ENCODE measurements at regions of chr5 and their contacts with region 1.

Region 1: DNA sequence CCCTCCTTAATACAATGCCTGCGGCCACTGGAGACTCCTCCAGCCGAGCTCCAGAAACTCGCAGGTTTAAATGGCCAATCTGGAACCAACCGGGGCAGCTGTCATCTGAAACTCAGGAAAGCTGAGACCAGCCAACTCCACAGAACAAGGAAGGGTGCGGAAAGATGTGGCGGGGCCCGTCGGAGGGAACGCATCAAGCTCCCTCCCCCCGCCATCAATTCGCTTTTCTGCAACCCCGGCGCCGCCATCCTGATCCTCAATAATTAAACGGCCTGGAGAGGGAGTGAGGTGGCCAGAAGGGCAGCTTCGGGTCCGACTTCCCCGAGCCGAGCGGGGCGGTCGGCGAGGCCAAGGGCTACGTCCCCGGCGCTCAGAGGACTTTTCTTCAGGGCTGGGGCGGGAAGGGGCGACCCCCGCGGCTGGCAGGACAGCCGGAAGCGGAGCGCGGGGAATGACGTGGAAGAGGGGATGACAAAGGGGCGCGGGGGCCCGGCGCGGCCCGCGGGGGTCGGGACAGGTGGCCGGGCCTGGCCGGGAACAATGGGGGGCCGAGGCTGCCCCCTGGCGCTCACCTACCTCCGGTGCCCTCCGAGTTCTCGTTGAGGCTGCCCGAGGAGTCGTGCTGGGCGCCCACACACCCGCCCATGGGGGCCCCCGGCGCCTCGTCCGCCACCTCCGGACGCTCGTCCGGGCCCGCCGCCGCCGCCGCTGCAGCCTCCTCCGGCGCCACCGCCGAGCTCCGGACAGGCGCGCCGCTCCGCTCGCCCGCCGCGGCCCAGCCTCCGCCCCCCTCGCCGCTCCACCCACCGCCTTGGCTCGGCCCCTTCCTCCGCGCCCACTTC is at the start of gene UBTD2:
- DNase-seq: peak in 1 of 2 donors; percentile 91
- H3K4me3 ChIP-seq: peak within 1 kb of the TSS; percentile 86 to 98
- H3K27ac ChIP-seq: peak within 1 kb of the TSS; percentile 88 to 97
- H3K4me1 ChIP-seq: peaks cover 6 to 23% of the 10 kb centered on the region in 2 donors
- H3K27me3 ChIP-seq: no peaks in the 10 kb centered on the region
- CTCF ChIP-seq: peak in 2 of 3 experiments; percentile 26 to 61
- total RNA-seq, gene UBTD2: 6.8 TPM

Region 2: DNA sequence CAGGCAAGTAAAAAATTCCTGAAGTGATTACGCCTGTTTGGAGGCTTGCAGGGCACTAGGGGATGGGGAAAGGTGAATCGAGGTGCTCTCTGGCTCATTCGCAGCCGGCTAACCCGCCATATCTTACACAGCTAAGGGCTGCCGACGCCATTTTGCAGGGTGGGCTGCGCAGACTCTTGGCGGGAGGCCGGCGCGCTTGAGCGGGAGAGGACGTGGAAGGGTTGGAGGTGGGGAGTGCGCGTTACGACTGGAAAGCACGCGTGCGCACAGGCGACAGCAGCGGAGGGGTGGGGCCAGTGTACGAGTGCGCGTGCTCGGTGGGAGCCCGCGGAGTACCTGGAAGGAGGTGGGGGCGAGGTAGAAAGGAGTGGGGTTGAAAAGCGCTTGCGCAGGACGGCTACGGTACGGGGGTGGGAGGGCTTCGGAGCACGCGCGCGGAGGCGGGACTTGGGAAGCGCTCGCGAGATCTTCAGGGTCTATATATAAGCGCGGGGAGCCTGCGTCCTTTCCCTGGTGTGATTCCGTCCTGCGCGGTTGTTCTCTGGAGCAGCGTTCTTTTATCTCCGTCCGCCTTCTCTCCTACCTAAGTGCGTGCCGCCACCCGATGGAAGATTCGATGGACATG is 895.8 kb before region 1 on chr5 and contains the start of gene NPM1:
- intact Hi-C with region 1: loop called (anchors 5 kb)
- DNase-seq: peak; percentile 78 to 97
- H3K4me3 ChIP-seq: peak within 1 kb of the TSS; percentile 68 to 94
- H3K27ac ChIP-seq: peak within 1 kb of the TSS; percentile 87 to 88
- H3K4me1 ChIP-seq: peaks cover 0 to 18% of the 10 kb centered on the region in 2 donors
- H3K27me3 ChIP-seq: no peaks in the 10 kb centered on the region
- CTCF ChIP-seq: no peak
- total RNA-seq, gene NPM1: 269 TPM

Region 3: DNA sequence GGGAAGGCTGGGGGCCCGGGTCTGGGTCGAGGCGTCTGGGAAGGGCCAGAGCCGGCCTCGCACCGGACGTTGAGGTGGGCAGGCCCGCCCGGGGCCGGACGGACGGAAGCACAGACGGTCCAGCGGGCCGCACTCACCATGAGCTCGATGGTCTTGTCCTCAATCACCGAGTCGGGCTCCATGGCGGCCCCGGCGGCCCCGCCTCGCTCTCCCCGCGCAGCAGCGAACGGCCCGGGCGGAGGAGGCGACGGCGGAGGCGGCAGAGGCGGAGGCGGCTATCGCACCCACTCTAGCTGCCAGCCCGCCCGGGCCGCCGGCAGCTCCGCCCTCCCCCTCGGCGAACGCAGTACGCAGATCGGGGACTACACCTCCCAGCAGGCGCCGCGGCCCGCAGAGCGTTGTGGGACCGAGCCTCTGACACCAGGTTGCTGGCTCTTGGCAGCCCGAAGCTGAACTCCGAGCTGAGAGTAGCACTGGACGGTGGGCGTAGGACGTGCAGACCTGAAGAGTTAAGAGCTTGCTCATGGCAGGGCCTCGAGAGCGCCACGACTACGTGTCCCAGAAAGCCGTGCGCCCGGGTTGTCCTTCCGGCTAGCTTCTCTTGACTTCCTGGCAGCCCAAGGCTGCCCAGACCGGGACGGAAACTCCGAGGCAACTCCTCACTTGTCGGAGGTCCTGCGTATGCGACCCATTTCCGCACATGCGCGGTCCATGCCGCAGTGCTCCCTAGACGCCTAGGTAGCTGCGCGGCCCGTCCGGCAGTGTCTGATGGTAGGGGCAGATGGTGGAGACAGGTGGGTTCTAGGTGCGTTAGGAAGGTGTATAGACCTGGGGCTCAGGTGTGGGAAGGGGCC is 276.7 kb before region 1 on chr5 and contains the start of gene FBXW11:
- intact Hi-C with region 1: loop called (anchors 2 kb)
- DNase-seq: peak; percentile 87 to 97
- H3K4me3 ChIP-seq: peak within 1 kb of the TSS; percentile 74 to 88
- H3K27ac ChIP-seq: peak within 1 kb of the TSS; percentile 97 to 99
- H3K4me1 ChIP-seq: peaks cover 6 to 37% of the 10 kb centered on the region in 2 donors
- H3K27me3 ChIP-seq: no peaks in the 10 kb centered on the region
- CTCF ChIP-seq: no peak
- total RNA-seq, gene FBXW11: 34.6 TPM

Region 4: DNA sequence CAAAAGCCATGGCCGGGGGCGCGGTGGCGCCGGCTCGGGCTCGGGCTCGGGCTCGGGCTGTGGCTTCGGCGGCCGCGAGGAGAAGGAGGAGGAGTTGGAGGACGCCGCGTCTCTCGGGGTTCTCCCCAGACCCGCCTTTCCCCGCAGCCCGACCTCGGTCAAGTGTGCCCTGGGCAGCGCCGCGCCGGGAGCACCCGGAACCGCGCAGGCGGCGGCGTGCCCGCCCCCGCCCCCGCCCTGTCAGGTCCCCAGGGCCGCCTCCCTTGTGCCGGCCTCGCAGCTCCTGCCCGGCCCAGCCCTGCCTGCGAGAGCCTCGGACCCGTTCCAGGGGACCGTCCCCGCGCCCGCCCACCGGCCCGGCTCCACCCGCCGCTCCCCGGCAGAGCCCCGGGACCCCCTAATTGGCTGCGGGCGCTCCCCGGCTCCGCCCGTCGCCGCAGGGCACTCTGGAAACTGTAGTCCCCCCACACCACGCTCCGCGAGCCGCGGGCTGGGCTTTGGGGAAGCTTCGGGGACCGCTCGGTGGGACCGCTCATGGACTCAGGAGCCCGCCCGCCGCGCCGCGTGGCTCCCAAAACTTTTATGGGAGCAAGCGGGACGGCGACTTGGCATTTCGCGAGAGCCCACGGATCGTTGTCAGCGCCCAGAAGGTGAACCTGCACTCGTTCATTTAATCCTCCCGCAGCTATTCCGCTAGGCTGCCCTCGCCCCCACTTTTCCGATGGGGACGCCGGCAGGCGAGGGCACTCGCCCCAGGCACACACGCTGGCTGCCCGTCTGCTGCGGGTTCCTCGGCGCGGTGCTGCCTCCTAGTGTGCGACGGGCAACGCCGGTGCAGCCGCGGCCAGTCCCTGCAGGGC is 95.0 kb before region 1 on chr5 and contains the start of gene STK10:
- intact Hi-C with region 1: loop called (anchors 1 kb)
- DNase-seq: peak; percentile 70 to 95
- H3K4me3 ChIP-seq: peak within 1 kb of the TSS; percentile 61 to 80
- H3K27ac ChIP-seq: peak within 1 kb of the TSS; percentile 86 to 88
- H3K4me1 ChIP-seq: peaks cover 0 to 8% of the 10 kb centered on the region in 2 donors
- H3K27me3 ChIP-seq: no peaks in the 10 kb centered on the region
- CTCF ChIP-seq: peak; percentile 91 to 94 (median 92)
- total RNA-seq, gene STK10: 18.4 TPM

Region 5: GRCh38 chr5:172412724-172413286 is 129.6 kb after region 1 on chr5:
- intact Hi-C with region 1: loop called (anchors 5 kb)
- DNase-seq: peak; percentile 57 to 88
- H3K4me3 ChIP-seq: no peak overlapping the region
- H3K27ac ChIP-seq: peak overlapping the region; percentile 58 to 67
- H3K4me1 ChIP-seq: peaks cover 17 to 49% of the 10 kb centered on the region in 2 donors
- H3K27me3 ChIP-seq: no peaks in the 10 kb centered on the region
- CTCF ChIP-seq: no peak

Region 6: GRCh38 chr5:172690258-172691075 is 407.2 kb after region 1 on chr5:
- intact Hi-C with region 1: loop called (anchors 5 kb)
- DNase-seq: no peak
- H3K4me3 ChIP-seq: no peak overlapping the region
- H3K27ac ChIP-seq: peak overlapping the region; percentile 75 to 81
- H3K4me1 ChIP-seq: peaks cover 21 to 54% of the 10 kb centered on the region in 2 donors
- H3K27me3 ChIP-seq: no peaks in the 10 kb centered on the region
- CTCF ChIP-seq: no peak

Region 7: GRCh38 chr5:173144200-173145176 is 861.2 kb after region 1 on chr5 and contains the start of gene BNIP1:
- intact Hi-C with region 1: loop called (anchors 10 kb)
- DNase-seq: peak; percentile 78 to 96
- H3K4me3 ChIP-seq: peak within 1 kb of the TSS; percentile 58 to 98
- H3K27ac ChIP-seq: peak within 1 kb of the TSS; percentile 82 to 86
- H3K4me1 ChIP-seq: peaks cover 0 to 4% of the 10 kb centered on the region in 2 donors
- H3K27me3 ChIP-seq: no peaks in the 10 kb centered on the region
- CTCF ChIP-seq: peak; percentile 82 to 91 (median 90)
- total RNA-seq, gene BNIP1: 11.3 TPM